ENCODE measurements at regions of chr18 and their contacts with region 1.

Region 1: GRCh38 chr18:10449396-10449795 is 5.0 kb upstream of the APCDD1 start:
- DNase-seq: no peak
- H3K4me3 ChIP-seq: no peak overlapping the region
- CTCF ChIP-seq: no peak

Region 2: GRCh38 chr18:10437837-10438236 is 11.6 kb before region 1 on chr18:
- CTCF ChIA-PET with region 1: interaction called, 14 read pairs
- POLR2A ChIA-PET with region 1: no interaction called
- DNase-seq: no peak
- H3K4me3 ChIP-seq: no peak overlapping the region
- CTCF ChIP-seq: no peak

Region 3: DNA sequence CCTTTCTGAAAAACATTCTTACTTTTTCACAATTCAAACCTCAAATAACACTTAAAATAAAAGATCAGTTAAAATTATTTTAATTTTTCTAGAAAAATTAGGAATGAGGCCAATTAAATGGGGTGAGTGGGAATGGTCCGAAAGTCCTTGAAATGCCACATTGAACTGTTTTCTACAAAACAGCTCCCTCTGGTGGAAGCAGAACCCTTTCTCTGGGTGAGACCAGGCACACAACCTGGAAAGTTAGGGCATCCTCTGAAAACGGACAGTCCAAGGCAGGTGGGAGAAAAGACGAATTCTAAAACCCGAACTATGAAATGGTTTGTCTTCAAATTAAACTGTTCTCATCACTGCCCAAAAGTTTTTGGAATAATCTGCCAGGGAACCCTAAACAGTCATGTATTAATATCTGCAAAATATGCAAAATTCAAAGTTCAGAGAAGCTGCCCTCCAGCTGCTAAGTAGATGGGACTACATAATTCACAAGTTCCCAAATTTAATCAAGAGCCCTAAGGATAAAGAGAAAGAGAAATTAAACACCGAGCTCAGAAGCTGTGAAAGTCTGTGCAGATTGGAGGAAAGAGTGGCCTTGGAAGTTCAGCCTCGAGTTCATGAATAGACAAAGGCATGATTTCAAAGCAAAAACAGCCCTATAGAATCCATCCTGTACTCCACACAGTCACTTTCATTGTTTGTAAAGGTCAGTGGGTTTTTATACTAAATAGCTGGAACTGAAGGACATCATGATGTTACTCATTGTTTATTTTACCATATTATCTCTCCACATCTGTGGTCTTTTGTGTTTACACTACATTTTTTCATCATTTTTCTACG is 591.6 kb after region 1 on chr18:
- CTCF ChIA-PET with region 1: no interaction called
- POLR2A ChIA-PET with region 1: no interaction called
- DNase-seq: no peak
- H3K4me3 ChIP-seq: no peak overlapping the region
- CTCF ChIP-seq: peak; percentile 67